ENCODE measurements at regions of chr6 and their contacts with region 1.

Region 1: GRCh38 chr6:24991810-24992467 is 56.2 kb upstream of the RIPOR2 start:
- DNase-seq: peak; percentile 68
- CTCF ChIP-seq: peak; percentile 79

Region 2: GRCh38 chr6:24874776-24875534 is 117.0 kb before region 1 on chr6:
- CTCF ChIA-PET with region 1: interaction called, 27 read pairs
- POLR2A ChIA-PET with region 1: no interaction called
- DNase-seq: no peak
- CTCF ChIP-seq: no peak

Region 3: DNA sequence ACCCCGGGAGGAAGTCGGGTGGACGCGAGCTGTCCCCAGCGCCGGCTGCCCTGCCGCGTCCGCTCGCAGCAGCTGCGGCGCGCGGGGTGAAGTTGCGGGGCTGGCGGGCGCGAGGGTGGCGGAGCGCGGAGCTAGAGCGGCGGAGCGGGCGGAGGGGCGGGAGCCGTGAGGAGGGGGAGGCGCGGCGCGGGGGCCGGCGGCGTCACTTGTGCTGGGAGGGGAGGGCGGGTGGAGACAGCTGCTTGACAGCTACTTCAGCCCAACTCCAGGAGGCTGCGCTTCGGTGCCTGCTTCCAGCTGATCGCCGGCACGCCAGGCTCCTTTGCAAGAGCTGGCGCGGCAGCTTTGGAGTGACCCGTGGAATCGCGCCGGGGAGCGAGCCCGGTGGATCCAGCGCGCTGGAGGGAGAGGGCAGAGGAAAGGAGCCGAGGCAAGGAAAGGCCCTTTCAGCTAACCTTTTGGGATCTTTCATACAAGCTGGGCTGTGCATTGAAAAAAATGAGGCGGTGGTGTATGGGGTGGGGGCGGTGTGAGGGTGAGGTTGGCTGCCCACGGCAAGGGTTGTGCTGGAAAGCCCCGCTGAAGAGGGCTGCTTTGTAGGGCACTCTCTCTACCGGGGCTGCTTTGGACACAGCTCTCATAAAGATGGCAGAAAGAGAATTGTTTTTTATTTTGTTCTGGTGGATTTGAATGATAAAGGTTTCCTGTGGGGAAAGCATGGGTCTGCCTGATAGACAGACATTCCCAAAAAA is 80.8 kb before region 1 on chr6:
- CTCF ChIA-PET with region 1: interaction called, 38 read pairs
- POLR2A ChIA-PET with region 1: no interaction called
- DNase-seq: peak; percentile 48
- CTCF ChIP-seq: no peak

Region 4: GRCh38 chr6:24960991-24961475 is 30.9 kb before region 1 on chr6:
- CTCF ChIA-PET with region 1: interaction called, 64 read pairs
- POLR2A ChIA-PET with region 1: no interaction called
- DNase-seq: no peak
- CTCF ChIP-seq: no peak

Region 5: DNA sequence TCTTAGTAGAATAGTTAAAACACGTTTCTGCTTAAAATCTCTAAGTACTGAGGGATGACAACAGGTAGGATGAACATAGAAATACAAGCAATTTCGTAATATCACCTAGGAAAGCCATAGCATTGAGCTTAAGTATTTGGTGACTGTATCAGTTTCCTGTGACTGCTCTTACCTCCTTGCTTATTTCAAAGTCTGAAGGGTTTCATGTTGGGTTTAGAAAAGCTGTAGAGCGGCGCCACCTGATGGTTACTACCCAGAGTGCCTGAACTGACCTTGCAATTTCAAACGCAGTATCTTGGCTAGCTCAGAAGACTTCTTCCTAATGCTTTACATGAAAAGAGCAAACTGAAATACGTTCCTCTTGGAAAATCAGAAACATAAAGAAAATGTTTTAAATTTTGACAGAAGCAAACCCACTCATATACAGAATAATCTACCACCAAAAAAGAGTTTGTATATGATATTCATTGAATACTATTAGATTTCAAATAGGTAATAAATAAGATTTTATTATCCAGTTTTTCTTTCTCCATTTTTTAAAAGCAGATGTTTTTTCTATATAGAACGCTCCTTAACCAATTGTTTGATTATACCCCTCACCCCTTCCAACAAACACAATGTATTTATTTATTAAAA is 26.1 kb after region 1 on chr6:
- CTCF ChIA-PET with region 1: interaction called, 39 read pairs
- POLR2A ChIA-PET with region 1: no interaction called
- DNase-seq: peak; percentile 70
- CTCF ChIP-seq: peak; percentile 82